ENCODE measurements at regions of chr15 and their contacts with region 1.

Region 1: GRCh38 chr15:60326824-60327654 is 70.7 kb downstream of the ANXA2 start:
- DNase-seq: peak; percentile 36 to 42
- H3K4me3 ChIP-seq: no peak overlapping the region
- H3K27ac ChIP-seq: no peak overlapping the region
- H3K4me1 ChIP-seq: no peaks in the 10 kb centered on the region
- H3K27me3 ChIP-seq: no peaks in the 10 kb centered on the region
- CTCF ChIP-seq: peak; percentile 89

Region 2: DNA sequence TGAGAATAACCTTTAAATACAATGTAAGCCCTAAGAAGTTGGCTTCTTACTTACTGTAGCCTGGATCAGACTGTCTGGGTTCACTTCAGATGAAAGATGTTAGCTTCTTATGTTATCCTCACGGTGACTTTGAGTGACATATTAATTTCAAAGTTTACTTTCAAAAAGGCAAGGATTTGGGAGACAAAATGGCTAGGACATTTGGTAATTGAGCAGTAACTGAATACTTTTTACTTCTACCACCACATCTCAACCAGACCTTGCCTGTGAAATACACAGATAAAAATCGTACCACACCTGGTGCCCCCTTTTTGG is 601.9 kb before region 1 on chr15:
- CTCF ChIA-PET with region 1: interaction called, 14 read pairs
- POLR2A ChIA-PET with region 1: no interaction called
- intact Hi-C with region 1: loop called (anchors 1 kb)
- DNase-seq: no peak
- H3K4me3 ChIP-seq: no peak overlapping the region
- H3K27ac ChIP-seq: no peak overlapping the region
- H3K4me1 ChIP-seq: no peaks in the 10 kb centered on the region
- H3K27me3 ChIP-seq: no peaks in the 10 kb centered on the region
- CTCF ChIP-seq: no peak

Region 3: DNA sequence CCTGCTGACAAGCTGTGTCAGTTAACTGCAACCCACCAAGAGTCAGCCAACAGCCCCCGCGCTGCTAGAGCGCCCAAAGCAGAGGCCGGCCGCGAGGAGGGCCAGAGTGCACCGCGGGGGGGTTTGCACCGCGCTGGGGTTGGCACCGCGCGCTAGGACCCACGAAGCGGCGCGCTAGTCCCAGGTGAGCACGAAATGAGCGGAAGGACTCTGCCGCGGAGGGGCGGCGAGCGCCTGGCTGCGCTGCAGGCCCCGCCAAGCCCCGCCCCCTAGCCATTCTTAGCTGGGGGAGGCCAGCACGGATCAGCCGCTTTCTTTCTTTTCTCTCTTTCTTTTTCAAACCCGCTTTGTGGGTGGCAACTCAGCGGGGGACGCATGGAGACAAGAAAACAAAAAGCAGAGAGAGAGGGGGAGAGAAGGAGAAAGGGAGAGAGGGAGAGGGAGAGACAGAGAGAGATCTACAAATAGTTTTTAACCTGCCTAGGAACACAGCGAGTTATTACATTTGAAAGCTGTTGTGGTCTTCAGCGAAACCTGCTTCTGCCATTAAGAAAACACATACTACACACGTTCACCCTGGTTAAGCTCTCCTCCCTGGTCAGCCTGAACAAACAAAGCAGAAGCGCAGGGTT is 329.9 kb before region 1 on chr15:
- CTCF ChIA-PET with region 1: no interaction called
- POLR2A ChIA-PET with region 1: no interaction called
- intact Hi-C with region 1: loop called (anchors 5 kb)
- DNase-seq: peak in 1 of 2 experiments; percentile 45
- H3K4me3 ChIP-seq: no peak overlapping the region
- H3K27ac ChIP-seq: no peak overlapping the region
- H3K4me1 ChIP-seq: no peaks in the 10 kb centered on the region
- H3K27me3 ChIP-seq: no peaks in the 10 kb centered on the region
- CTCF ChIP-seq: no peak

Region 4: GRCh38 chr15:60128000-60128376 is 199.1 kb before region 1 on chr15:
- CTCF ChIA-PET with region 1: no interaction called
- POLR2A ChIA-PET with region 1: no interaction called
- intact Hi-C with region 1: loop called (anchors 1 kb)
- DNase-seq: peak in 1 of 2 experiments; percentile 63
- H3K4me3 ChIP-seq: peak overlapping the region; percentile 53
- H3K27ac ChIP-seq: peak overlapping the region; percentile 90
- H3K4me1 ChIP-seq: peaks cover 23% of the 10 kb centered on the region
- H3K27me3 ChIP-seq: no peaks in the 10 kb centered on the region
- CTCF ChIP-seq: no peak

Region 5: DNA sequence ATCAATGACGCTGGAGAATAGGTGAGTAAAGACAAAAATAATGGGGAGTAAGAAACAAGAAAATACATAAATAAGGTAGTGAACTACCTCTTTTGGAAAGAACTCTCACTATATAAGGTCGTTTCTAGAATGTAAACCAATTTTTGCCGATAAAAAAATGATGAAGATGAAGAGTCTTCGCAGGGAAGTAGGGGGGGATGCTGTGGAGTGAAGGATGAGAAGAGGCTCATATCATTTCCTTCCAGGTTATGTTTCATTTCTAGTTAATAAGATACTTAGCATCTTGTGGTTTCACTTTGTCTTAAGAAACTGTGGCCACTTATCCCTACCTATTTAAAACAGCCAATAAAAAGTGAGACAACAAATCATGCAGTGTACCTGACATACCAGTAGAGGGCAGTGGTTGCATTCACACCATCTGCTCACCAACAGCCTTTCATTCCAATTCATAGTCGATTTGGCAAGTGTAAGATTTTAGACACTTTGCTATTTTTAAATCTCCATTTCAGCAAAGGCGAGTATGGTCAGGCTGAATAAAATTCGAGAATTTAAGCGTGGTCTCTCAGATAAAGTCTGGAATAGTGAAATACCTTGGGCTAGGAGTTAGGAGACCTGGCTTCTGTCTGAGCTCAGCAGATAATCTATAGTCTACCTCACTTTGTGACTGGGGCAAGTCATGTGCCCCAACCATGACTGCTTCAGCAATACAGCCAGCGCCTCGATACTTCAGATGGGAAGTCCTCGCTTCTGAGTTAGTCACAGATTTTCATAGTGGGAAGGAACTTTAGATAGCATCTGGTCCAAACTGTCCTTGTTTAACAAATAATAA is 180.8 kb after region 1 on chr15:
- CTCF ChIA-PET with region 1: no interaction called
- POLR2A ChIA-PET with region 1: no interaction called
- intact Hi-C with region 1: loop called (anchors 5 kb)
- DNase-seq: peak in 1 of 2 experiments; percentile 45
- H3K4me3 ChIP-seq: no peak overlapping the region
- H3K27ac ChIP-seq: no peak overlapping the region
- H3K4me1 ChIP-seq: no peaks in the 10 kb centered on the region
- H3K27me3 ChIP-seq: no peaks in the 10 kb centered on the region
- CTCF ChIP-seq: peak; percentile 85

Region 6: DNA sequence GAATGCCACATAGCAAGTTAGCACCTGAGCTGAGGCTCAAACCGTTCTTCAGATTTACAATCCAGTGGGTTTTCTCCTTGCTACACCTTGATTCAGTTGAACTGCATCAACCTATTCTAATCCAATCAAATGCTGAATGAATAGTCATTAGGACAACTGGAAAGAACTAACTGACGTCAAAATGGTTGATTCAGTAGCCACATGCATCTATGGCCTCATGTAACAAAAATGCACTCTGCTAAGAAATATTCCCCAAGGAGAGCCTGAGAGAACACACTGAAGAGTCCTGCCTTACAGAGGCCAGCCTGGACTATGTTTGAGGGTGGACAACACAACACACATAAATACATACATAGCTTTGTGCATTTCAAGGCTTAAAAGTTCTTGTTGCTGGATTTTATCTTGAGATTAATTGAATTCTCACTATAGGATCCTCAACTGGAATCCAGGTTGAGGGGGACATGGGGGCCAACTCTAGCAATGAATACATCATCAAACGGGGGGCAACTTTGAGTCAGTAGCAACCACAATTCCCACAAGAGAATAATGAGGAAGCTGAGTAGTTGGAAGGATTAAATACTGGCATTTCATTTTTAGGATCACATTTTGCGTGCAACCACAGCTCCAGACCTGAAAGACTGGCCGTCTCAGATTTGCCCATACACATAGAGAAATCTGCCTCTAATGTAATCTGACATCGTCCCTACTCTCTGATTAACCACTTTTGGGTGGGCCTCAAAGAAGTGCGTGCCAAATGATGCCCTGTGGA is 432.1 kb after region 1 on chr15:
- CTCF ChIA-PET with region 1: no interaction called
- POLR2A ChIA-PET with region 1: no interaction called
- intact Hi-C with region 1: no loop called
- DNase-seq: no peak
- H3K4me3 ChIP-seq: no peak overlapping the region
- H3K27ac ChIP-seq: no peak overlapping the region
- H3K4me1 ChIP-seq: no peaks in the 10 kb centered on the region
- H3K27me3 ChIP-seq: no peaks in the 10 kb centered on the region
- CTCF ChIP-seq: no peak